ENCODE measurements at regions of chr11 and their contacts with region 1.

Region 1: DNA sequence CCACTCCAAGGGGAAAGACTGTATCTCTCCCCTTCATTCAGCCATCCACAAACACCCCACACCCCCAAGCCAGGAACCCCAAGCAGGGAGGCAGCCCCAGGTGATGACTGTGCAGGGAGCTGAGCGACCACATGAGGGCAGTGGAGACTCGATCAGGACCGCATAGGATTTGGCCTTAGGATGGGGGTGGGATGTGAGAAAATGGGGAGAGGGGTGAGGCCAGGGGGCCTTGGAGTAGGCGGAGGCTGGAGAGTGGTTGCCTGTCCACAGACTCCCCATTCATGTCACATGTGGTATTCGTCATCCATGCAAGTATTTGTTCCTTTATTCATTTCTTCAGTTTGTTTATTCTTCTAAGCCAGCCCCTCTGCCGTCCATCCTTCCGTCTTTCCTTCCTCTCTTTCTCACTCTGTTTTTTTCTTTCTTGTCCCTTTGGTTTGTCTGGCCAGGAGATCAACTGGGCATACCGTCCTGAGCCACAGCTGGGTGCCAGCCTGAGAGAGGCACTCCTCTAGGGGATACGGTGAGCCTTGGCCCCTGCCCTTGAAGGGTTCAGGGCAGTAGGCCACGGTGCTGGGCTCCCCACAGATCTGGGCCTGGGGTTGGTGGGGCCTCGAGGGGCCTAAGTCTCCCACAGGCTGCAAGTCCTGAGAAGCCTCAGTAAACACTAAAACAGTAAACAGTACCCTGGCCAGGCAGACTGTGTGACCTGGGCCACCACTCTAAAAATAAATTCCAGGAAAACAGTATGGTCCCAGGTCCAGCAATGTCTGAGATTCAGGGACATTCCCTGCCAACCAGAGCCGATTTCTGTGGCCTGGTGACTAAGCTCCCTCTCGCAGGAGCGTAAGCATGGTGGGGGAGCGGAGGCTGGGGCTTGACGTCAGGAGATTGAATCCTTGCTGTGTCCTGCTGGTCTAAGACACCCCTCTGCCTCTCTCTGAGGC is 2.5 kb upstream of the RHOD start:
- H3K4me3 ChIP-seq: no peak overlapping the region
- H3K27ac ChIP-seq: no peak overlapping the region
- H3K4me1 ChIP-seq: peaks cover 9% of the 10 kb centered on the region
- CTCF ChIP-seq: peak; percentile 48; the same call in 1 of the 2 replicates

Region 2: DNA sequence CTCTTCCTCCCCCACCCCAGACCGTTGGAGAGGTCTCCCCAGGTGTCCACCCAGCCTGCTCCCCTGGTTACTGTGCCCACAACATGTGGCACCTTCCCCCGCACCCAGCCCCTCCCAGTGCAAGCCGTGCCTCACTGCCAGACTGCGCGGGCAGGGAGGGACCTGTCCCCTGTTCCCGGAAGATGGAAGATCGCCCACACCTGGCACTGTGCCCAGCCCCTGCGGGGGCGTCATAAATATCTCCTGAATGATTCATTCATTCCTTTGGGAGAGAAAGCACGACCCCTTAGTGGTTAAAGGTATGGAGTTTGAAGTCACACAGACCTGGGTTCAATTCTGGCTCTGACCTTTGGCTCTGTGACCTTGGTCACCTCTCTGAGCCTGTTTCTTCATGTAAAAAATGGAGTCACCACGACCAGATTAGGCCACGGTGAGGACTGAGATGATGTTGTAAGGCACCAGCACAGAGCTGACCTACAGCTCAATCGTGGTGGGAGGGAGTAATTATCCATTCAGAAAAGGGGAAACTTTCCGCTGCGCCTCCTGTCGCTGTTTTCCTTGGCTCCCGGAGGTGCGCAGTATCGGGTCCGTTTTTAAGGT is 31.7 kb before region 1 on chr11:
- CTCF ChIA-PET with region 1: interaction called, 10 read pairs
- POLR2A ChIA-PET with region 1: interaction called, 7 read pairs
- H3K4me3 ChIP-seq: peak overlapping the region; percentile 45
- H3K27ac ChIP-seq: no peak overlapping the region
- H3K4me1 ChIP-seq: peaks cover 5% of the 10 kb centered on the region
- CTCF ChIP-seq: no peak

Region 3: DNA sequence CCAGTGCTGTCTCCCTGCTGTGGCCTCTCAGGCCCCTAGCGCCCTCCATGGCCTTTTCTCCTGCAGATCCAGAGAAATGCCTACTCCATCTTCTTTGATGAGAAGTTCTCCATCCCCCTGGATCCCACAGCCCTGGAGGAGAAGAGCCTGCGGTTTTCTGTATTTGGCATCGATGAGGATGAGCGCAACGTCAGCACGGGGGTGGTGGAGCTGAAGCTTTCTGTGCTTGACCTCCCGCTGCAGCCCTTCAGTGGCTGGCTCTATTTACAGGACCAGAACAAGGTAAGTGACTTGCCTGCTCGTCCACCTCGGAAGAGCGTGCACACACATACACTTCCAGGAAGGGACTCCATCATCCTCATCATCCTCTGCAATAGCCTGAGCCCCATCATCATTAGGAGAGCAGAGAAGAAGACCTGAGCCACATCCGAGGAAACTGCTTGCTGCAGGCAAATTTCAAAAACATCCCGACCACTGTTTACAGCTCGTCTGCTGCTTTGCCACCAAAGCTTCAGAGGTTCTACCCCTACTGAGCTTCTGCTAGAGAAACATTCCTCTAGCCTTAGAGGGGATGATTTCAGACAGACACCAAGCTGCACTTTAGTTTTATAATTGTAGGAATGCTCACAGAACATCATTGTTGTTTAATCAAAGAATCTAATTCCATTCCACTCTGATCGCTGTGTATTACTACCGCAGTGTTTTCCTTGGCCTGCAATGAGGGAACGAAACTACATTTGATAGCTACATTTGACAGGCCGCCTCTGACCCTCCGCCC is 10.4 kb before region 1 on chr11:
- CTCF ChIA-PET with region 1: interaction called, 11 read pairs
- POLR2A ChIA-PET with region 1: interaction called, 3 read pairs
- H3K4me3 ChIP-seq: no peak overlapping the region
- H3K27ac ChIP-seq: no peak overlapping the region
- H3K4me1 ChIP-seq: no peaks in the 10 kb centered on the region
- CTCF ChIP-seq: no peak

Region 4: GRCh38 chr11:67071420-67072284 is 17.5 kb after region 1 on chr11:
- CTCF ChIA-PET with region 1: interaction called, 23 read pairs
- POLR2A ChIA-PET with region 1: interaction called, 3 read pairs
- H3K4me3 ChIP-seq: no peak overlapping the region
- H3K27ac ChIP-seq: no peak overlapping the region
- H3K4me1 ChIP-seq: no peaks in the 10 kb centered on the region
- CTCF ChIP-seq: peak; percentile 34; the same call in 1 of the 2 replicates

Region 5: DNA sequence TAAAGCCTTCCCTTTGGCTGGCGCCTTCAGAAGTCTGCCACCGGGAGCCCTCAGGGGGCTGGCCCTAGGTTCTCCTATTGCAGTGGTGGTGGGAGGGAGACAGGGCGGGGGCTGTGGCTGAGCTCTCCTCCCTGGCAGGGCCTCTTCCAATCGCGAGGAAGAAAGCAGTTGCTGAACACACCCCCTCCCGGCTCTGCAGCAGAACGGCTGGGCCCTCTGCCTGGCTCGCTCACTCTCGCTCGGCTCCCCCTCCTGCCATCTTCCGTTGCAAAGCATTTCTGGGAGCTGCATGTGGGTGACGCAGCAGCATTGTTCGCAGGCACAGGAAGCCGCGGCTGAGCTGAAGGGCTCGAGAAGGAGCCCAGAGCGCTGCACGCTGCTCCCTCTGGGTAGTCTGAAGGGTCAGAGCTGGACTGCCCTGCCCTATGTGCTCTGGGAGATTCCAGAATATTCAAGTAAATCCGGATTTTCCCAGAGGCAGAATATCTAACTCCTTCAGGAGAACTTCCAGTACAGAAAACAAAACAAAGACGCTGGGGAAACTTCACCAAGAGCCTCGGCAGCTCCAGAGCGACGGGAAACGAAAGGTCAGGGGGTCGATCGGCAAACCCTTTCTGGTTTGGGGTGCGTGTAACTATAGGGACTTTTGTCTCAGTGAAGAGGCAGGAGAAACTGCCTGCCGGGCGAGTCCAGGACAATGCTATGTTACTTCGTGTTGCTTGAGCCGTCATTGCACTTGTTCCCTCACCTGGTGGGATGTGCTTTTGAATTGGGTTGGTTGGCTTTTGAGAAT is 185.8 kb after region 1 on chr11:
- CTCF ChIA-PET with region 1: interaction called, 3 read pairs
- POLR2A ChIA-PET with region 1: interaction called, 16 read pairs
- H3K4me3 ChIP-seq: peak overlapping the region; percentile 61
- H3K27ac ChIP-seq: peak overlapping the region; percentile 26; the same call in 1 of the 2 replicates
- H3K4me1 ChIP-seq: peaks cover 5% of the 10 kb centered on the region; the same call in 1 of the 2 replicates
- CTCF ChIP-seq: no peak